CD8-positive, alpha-beta memory T cell (primary cell): ENCODE measurements at regions of chr7 and their contacts with region 1.

Region 1: GRCh38 chr7:8176370-8177081 is 85.4 kb downstream of the ICA1 start:
- DNase-seq: peak; percentile 28 to 83 (median 68)
- H3K4me3 ChIP-seq: peak overlapping the region; percentile 35
- H3K4me3 Mint-ChIP-seq: peak overlapping the region; percentile 49 to 85 (median 70)
- H3K27ac ChIP-seq: peak overlapping the region; percentile 48
- H3K27ac Mint-ChIP-seq: peak overlapping the region; percentile 91 to 98 (median 95)
- H3K4me1 ChIP-seq: peaks cover 47% of the 10 kb centered on the region
- H3K4me1 Mint-ChIP-seq: peaks cover 59 to 76% (median 63%) of the 10 kb centered on the region in 3 donors
- H3K27me3 ChIP-seq: no peaks in the 10 kb centered on the region
- H3K27me3 Mint-ChIP-seq: no peaks in the 10 kb centered on the region

Region 2: GRCh38 chr7:8125680-8126444 is 50.7 kb before region 1 on chr7:
- CTCF ChIA-PET with region 1: interaction called, 16 read pairs
- POLR2A ChIA-PET with region 1: interaction called, 5 read pairs
- DNase-seq: peak; percentile 74 to 91 (median 79)
- H3K4me3 ChIP-seq: peak overlapping the region; percentile 40
- H3K4me3 Mint-ChIP-seq: peak overlapping the region; percentile 5 to 85 (median 70)
- H3K27ac ChIP-seq: peak overlapping the region; percentile 40
- H3K27ac Mint-ChIP-seq: peak overlapping the region; percentile 89 to 99 (median 97)
- H3K4me1 ChIP-seq: peaks cover 83% of the 10 kb centered on the region
- H3K4me1 Mint-ChIP-seq: peaks cover 72 to 94% (median 87%) of the 10 kb centered on the region in 3 donors
- H3K27me3 ChIP-seq: no peaks in the 10 kb centered on the region
- H3K27me3 Mint-ChIP-seq: no peaks in the 10 kb centered on the region